ENCODE measurements at regions of chr11 and their contacts with region 1.

Region 1: DNA sequence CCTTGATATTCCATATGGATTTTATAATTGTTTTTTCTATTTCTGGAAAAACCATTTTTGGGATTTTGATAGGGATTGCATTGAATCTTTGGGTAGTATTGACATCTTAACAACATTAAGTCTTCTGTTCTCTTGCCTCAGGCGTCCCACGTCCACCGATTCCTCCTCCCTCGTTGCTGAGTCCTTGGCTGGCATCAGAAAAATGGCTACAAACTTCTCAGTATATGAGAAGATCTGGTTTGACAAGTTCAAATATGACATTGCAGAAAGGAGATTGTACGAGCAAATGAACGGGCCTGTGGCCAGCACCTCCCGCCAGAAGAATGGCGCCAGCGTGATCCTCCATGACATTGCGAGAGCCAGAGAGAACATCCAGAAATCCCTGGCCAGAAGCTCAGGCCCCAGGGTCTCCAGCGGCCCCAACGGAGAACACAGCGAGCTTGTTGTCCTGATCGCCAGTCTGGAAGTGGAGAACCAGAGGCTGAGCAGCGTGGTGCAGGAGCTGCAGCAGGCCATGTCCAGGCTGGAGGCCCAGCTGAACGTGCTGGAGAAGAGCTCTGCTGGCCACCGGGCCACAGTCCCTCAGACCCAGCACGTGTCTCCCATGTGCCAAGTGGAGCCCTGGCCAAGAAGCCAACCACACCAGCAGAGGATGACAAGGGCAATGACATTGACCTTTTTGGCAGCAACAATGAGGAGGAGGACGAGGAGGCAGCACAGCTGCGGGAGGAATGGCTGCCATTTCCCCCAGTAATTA is 20.7 kb upstream of the SCGB1D1 start:
- DNase-seq: no peak
- H3K4me3 Mint-ChIP-seq: no peak overlapping the region
- H3K27ac Mint-ChIP-seq: no peak overlapping the region
- H3K4me1 Mint-ChIP-seq: peaks cover 4% of the 10 kb centered on the region
- H3K27me3 Mint-ChIP-seq: peaks cover 23% of the 10 kb centered on the region

Region 2: DNA sequence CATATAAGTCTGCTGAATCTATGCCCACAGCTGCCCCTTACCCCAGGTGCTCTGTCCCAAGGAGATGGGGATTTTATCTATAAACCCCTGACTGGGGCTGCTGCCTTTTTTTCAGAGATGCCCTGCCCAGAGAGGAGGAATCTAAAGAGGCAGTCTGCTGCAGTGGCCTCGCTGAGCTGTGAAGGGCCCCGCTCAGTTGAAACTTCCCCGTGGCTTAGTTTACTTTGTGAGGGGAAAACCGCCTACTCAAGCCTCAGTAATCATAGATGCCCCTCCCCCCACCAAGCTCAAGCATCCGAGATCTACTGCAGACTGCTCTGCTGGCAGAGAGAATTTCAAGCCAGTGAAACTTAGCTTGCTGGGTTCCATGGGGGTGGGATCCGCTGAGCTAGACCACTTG is 137.0 kb after region 1 on chr11:
- CTCF ChIA-PET with region 1: interaction called, 26 read pairs
- POLR2A ChIA-PET with region 1: interaction called, 7 read pairs
- intact Hi-C with region 1: loop called (anchors 1 kb)
- DNase-seq: no peak
- H3K4me3 Mint-ChIP-seq: no peak overlapping the region
- H3K27ac Mint-ChIP-seq: no peak overlapping the region
- H3K4me1 Mint-ChIP-seq: peaks cover 2% of the 10 kb centered on the region
- H3K27me3 Mint-ChIP-seq: peaks cover 22% of the 10 kb centered on the region

Measured in activated CD4-positive, alpha-beta memory T cell treated with anti-CD3 and anti-CD28 coated beads for 36 hours (primary cell).